ENCODE measurements at regions of chr6 and their contacts with region 1.

Region 1: DNA sequence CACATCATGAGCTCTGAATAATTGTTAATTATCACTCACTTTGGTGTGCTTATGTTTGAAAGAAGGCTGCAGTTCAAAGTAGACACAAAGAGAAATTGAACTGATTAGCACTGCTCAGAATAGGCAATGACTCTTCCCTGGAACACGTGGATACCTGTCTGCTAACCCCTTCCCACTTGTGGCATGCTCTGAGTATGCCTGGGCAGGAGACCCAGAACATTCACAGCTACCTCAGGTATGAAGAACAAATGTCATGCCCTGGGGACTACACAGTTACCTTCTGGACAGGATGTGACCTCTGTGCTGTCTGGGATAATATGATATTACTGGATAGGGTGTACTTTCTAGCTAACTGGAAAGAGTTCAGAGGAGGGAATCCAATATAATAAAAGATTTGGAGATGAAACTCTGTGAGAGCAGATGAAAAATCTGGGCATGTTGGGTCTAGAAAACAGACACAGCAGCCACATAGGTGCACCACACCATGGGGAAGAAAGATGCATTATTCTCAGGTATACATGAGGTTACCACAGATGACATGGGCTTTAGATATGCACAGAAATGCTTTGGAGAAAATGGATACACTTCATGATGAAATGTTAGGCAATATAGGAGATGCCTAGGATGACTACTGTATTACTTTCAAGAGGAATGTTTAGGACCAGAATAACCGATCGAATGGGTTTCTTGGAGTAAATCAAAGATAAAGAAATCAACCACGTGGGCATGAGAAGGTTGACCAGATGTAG is 324.2 kb upstream of the PREP start:
- DNase-seq: peak; percentile 89
- H3K4me3 ChIP-seq: no peak overlapping the region
- H3K27ac ChIP-seq: peak overlapping the region; percentile 95
- H3K4me1 ChIP-seq: peaks cover 22% of the 10 kb centered on the region
- H3K27me3 ChIP-seq: no peaks in the 10 kb centered on the region
- CTCF ChIP-seq: no peak

Region 2: GRCh38 chr6:105431226-105431625 is 295.9 kb before region 1 on chr6:
- CTCF ChIA-PET with region 1: no interaction called
- dilution Hi-C with region 1: no loop called
- in situ Hi-C with region 1: no loop called
- intact Hi-C with region 1: loop called (anchors 2 kb)
- DNase-seq: peak; percentile 46
- H3K4me3 ChIP-seq: no peak overlapping the region
- H3K27ac ChIP-seq: no peak overlapping the region
- H3K4me1 ChIP-seq: peaks cover 35% of the 10 kb centered on the region
- H3K27me3 ChIP-seq: no peaks in the 10 kb centered on the region
- CTCF ChIP-seq: peak; percentile 57

Region 3: DNA sequence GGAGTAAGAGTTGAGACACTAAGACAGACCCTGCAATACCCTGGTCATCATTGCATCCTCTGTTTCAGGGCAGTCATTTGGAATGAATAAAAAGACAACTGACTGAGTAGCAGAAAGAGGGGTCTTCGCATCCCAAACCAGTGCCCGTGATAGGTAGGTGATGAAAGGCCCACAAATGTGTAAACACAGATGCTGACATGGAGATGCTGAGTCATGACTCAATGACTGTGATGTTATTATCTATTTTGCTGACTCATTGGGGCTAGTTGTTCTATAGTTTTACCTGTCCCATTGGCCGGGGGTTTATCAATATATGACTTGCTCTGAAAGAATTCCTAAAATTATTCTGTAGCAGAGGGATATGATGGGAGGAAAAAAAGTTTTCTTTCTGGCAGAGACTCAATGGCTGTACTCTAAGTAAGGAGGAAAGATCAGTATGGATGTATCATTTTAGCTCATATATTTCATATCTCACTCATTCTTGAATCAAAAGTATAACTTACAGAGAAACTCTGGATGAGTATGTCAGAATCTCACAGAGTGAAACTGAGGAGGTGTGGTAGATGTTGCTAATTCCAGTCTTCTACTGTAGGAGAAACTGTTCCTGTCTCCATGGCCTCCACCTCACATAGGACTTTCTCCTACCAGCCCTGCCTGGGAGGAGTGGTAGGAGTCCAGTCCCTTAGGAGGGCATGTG is 204.3 kb before region 1 on chr6:
- CTCF ChIA-PET with region 1: no interaction called
- dilution Hi-C with region 1: no loop called
- in situ Hi-C with region 1: no loop called
- intact Hi-C with region 1: loop called (anchors 1 kb)
- DNase-seq: peak; percentile 70
- H3K4me3 ChIP-seq: no peak overlapping the region
- H3K27ac ChIP-seq: peak overlapping the region; percentile 44
- H3K4me1 ChIP-seq: peaks cover 9% of the 10 kb centered on the region
- H3K27me3 ChIP-seq: no peaks in the 10 kb centered on the region
- CTCF ChIP-seq: no peak

Region 4: GRCh38 chr6:105536961-105537360 is 190.1 kb before region 1 on chr6:
- CTCF ChIA-PET with region 1: no interaction called
- dilution Hi-C with region 1: no loop called
- in situ Hi-C with region 1: no loop called
- intact Hi-C with region 1: loop called (anchors 1 kb)
- DNase-seq: peak; percentile 96
- H3K4me3 ChIP-seq: no peak overlapping the region
- H3K27ac ChIP-seq: peak overlapping the region; percentile 96
- H3K4me1 ChIP-seq: peaks cover 19% of the 10 kb centered on the region
- H3K27me3 ChIP-seq: no peaks in the 10 kb centered on the region
- CTCF ChIP-seq: peak in 1 of 2 donors; percentile 10

Region 5: GRCh38 chr6:106194949-106195921 is 468.2 kb after region 1 on chr6:
- CTCF ChIA-PET with region 1: no interaction called
- dilution Hi-C with region 1: no loop called
- in situ Hi-C with region 1: loop called in 1 of 2 experiments (anchors 25 kb)
- intact Hi-C with region 1: loop called (anchors 2 kb)
- DNase-seq: peak; percentile 99
- H3K4me3 ChIP-seq: peak overlapping the region in 1 of 3 experiments; percentile 17
- H3K27ac ChIP-seq: peak overlapping the region; percentile 99
- H3K4me1 ChIP-seq: peaks cover 42% of the 10 kb centered on the region
- H3K27me3 ChIP-seq: no peaks in the 10 kb centered on the region
- CTCF ChIP-seq: no peak

Region 6: GRCh38 chr6:106325336-106326178 is 598.5 kb after region 1 on chr6 and contains the start of gene ATG5:
- CTCF ChIA-PET with region 1: no interaction called
- dilution Hi-C with region 1: no loop called
- in situ Hi-C with region 1: no loop called
- intact Hi-C with region 1: loop called (anchors 1 kb)
- DNase-seq: peak; percentile 99
- H3K4me3 ChIP-seq: peak within 1 kb of the TSS; percentile 74 to 97 (median 85)
- H3K27ac ChIP-seq: peak within 1 kb of the TSS; percentile 91
- H3K4me1 ChIP-seq: peaks cover 16% of the 10 kb centered on the region
- H3K27me3 ChIP-seq: no peaks in the 10 kb centered on the region
- CTCF ChIP-seq: no peak
- total RNA-seq, gene ATG5: 34.5 to 46.0 TPM

Measured in mammary epithelial cell (primary cell).